ENCODE measurements at regions of chr6 and their contacts with region 1.

Region 1: GRCh38 chr6:40999569-40999968 is 39.5 kb downstream of the UNC5CL start:
- DNase-seq: peak; percentile 59 to 83 (median 76)
- ATAC-seq: peak; percentile 97
- H3K4me3 ChIP-seq: no peak overlapping the region
- H3K27ac ChIP-seq: no peak overlapping the region
- H3K4me1 ChIP-seq: peaks cover 13 to 27% of the 10 kb centered on the region in 2 experiments; a peak in 4 of 5 replicates
- H3K27me3 ChIP-seq: peaks cover 16 to 26% of the 10 kb centered on the region in 2 experiments
- CTCF ChIP-seq: peak; percentile 74 to 80 (median 78)
- EP300 ChIP-seq: no peak
- POLR2A ChIP-seq: no peak
- RAD21 ChIP-seq: peak; percentile 40 to 58

Region 2: DNA sequence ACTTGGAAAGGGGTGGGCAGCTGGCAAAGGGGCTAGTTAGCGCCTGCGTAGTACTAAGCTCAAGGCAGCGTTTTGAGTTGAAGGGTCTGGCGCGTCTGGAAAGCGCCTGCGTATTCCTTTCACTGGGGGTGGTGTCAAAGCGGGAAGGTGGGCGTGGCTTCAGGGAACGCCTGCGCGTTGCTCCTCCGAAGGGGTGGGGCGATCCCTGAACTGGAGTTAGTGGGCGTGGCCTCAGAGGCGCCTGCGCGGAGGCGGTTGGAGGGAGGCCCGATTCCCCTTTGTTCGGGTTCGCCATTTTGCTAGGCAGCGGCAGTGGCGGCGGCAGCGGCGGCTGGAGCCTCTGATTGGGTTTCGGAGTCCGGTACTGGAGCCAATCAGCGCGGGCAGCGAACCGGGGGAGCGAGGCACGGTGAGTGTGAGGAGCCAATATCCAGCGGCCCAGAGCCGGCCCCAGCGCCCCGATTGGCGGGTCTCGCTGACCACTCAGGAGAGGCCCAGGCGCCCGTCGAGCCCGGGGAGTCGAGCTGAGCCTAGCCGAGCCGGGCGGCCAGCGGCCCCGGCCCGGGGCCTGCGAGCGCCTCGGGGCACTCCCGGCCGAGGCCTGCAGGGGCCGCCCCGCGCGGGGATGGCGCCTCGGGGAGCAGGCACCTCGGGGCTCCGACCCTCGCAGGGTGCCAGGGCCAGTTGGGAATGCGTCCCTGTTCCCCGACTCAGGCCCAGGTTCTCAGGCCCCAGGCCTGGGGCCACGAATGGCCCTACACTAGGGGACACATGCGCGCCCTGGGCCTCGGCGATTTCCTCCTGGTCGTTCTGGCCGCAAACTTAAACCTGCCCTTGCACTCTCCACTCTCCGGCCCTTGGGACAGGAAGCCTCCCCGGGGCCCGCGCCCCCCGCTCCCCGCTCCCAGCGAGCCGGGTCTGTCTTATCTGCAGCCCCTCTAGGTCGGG is 73.4 kb after region 1 on chr6 and contains the start of gene NFYA:
- CTCF ChIA-PET with region 1: interaction called, 26 read pairs
- POLR2A ChIA-PET with region 1: no interaction called
- in situ Hi-C with region 1: no loop called
- intact Hi-C with region 1: loop called (anchors 5 kb)
- DNase-seq: peak in 3 of 4 experiments; percentile 97 to 98 (median 97)
- ATAC-seq: peak; percentile 84
- H3K4me3 ChIP-seq: peak within 1 kb of the TSS; percentile 83
- H3K27ac ChIP-seq: peak within 1 kb of the TSS; percentile 94
- H3K4me1 ChIP-seq: peaks cover 9 to 21% of the 10 kb centered on the region in 2 experiments
- H3K27me3 ChIP-seq: no peaks in the 10 kb centered on the region
- CTCF ChIP-seq: peak; percentile 44 to 54 (median 45); a peak in 4 of 6 replicates
- EP300 ChIP-seq: no peak
- POLR2A ChIP-seq: peak; percentile 87; the same call in 1 of the 2 replicates
- RAD21 ChIP-seq: peak in 1 of 2 experiments; percentile 42; a peak in 2 of 4 replicates
- polyA plus RNA-seq, gene NFYA: 7.3 to 10.1 TPM